CD8-positive, alpha-beta T cell (primary cell): ENCODE measurements at regions of chr5 and their contacts with region 1.

Region 1: GRCh38 chr5:81909677-81910076 is 62.1 kb upstream of the ATG10 start:
- DNase-seq: no peak
- ATAC-seq: no peak
- H3K4me3 ChIP-seq: no peak overlapping the region
- H3K4me3 Mint-ChIP-seq: no peak overlapping the region
- H3K27ac ChIP-seq: no peak overlapping the region
- H3K27ac Mint-ChIP-seq: no peak overlapping the region
- H3K4me1 ChIP-seq: no peaks in the 10 kb centered on the region
- H3K4me1 Mint-ChIP-seq: no peaks in the 10 kb centered on the region
- H3K27me3 ChIP-seq: no peaks in the 10 kb centered on the region
- H3K27me3 Mint-ChIP-seq: no peaks in the 10 kb centered on the region
- CTCF ChIP-seq: no peak

Region 2: DNA sequence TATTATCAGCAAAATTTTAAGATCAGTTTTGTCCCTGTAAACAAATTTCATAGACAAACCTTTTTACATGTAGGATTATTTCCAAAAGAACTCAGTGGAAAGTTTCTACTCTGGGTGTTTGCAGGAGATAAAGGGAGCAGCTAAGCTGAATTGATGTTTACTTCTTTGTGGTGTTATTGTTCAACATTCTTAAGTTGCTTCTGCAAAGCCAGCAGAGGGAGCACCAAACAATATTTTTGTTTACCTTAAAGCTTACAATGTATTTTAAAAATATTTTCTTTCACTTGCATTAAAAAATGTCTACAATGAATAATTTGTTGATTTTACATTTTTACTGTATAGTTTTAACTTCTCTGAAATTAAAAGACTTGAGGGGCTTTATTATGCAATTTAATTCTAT is 197.6 kb after region 1 on chr5:
- CTCF ChIA-PET with region 1: no interaction called
- POLR2A ChIA-PET with region 1: no interaction called
- intact Hi-C with region 1: loop called in 1 of 2 experiments (anchors 10 kb)
- DNase-seq: peak in 1 of 9 experiments; percentile 9
- ATAC-seq: no peak
- H3K4me3 ChIP-seq: no peak overlapping the region
- H3K4me3 Mint-ChIP-seq: no peak overlapping the region
- H3K27ac ChIP-seq: no peak overlapping the region
- H3K27ac Mint-ChIP-seq: no peak overlapping the region
- H3K4me1 ChIP-seq: no peaks in the 10 kb centered on the region
- H3K4me1 Mint-ChIP-seq: peaks cover 20% of the 10 kb centered on the region
- H3K27me3 ChIP-seq: no peaks in the 10 kb centered on the region
- H3K27me3 Mint-ChIP-seq: no peaks in the 10 kb centered on the region
- CTCF ChIP-seq: no peak

Region 3: GRCh38 chr5:82480331-82480730 is 570.7 kb after region 1 on chr5:
- CTCF ChIA-PET with region 1: no interaction called
- POLR2A ChIA-PET with region 1: no interaction called
- intact Hi-C with region 1: no loop called
- DNase-seq: no peak
- ATAC-seq: no peak
- H3K4me3 ChIP-seq: no peak overlapping the region
- H3K4me3 Mint-ChIP-seq: no peak overlapping the region
- H3K27ac ChIP-seq: no peak overlapping the region
- H3K27ac Mint-ChIP-seq: no peak overlapping the region
- H3K4me1 ChIP-seq: no peaks in the 10 kb centered on the region
- H3K4me1 Mint-ChIP-seq: no peaks in the 10 kb centered on the region
- H3K27me3 ChIP-seq: no peaks in the 10 kb centered on the region
- H3K27me3 Mint-ChIP-seq: peaks cover 5% of the 10 kb centered on the region
- CTCF ChIP-seq: no peak